Heart right ventricle (tissue), 16 donors: ENCODE measurements at regions of chr11 and their contacts with region 1.

Region 1: DNA sequence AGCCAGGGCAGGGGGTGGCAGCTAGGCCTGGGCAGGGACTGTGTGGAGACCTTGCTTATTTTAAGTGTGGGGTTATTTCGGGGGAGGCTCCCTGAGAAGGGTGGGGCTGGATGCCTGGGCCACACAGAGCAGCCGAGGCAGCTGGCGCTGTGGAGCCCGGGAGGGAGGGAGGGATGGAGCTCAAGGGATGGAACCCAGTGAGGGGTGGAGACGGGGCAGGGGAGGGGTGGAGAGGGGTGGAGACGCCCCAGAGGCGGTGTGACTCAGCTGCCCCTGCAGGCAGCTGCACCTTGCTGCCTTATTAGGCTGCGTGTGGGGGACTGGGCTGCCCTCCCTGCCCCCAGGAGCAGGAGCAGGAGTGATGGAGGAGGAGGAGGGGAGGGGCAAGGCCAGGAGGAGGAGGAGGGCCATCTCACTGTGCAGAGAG is 9.8 kb upstream of the TSSC4 start:
- DNase-seq: no peak
- ATAC-seq: peak in 7 of 8 donors; percentile 16 to 58 (median 35)
- H3K4me3 ChIP-seq: no peak overlapping the region
- H3K27ac ChIP-seq: peak overlapping the region in 8 of 10 donors; percentile 48 to 79 (median 68)
- H3K4me1 ChIP-seq: peaks cover 48 to 76% (median 59%) of the 10 kb centered on the region in 9 donors
- H3K27me3 ChIP-seq: no peaks in the 10 kb centered on the region
- CTCF ChIP-seq: no peak

Region 2: DNA sequence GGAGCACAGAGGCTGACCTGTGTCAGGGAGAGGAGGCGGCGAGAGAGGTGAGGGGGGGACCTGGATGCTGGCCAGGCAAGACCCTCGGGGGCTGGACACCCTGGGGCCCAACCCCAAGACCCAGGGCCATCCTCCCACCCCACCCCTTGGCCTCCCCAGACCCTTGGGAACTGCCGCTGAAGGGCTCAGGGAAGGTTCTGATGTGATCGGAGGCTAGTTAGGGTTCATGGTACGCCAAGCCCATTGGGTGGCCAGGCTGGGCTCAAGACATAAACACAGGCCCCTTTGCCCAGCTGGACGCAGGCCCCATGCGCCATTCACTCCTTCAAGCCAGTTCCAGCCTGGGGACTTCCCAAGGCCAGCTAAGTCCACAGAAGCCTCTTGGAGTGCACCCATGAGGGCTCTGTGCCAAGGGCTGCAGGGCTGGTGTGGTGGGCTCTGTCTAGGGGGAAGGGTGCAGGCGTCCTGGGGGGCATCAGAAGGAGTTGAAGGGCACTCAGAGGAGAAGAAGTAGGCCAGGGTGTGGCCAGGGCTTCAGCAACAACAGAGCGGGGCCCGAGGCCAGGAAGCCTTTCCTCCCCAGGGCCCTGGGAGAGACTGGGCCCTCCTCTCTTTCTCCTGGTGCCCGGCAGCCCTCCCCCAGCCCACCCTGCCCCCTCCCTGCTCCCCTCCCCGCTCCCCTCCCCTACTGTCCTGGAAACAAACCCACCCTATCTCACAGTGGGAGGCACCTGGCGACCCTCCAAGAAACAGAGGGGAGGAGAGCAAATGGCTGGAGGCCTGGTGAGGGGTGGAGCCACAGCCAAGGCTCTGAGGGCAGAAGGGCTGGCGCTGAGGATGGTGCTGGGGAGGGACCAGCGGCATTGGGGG is 76.0 kb before region 1 on chr11:
- intact Hi-C with region 1: loop called in 2 of 10 experiments (anchors 5 kb)
- DNase-seq: peak; percentile 91 to 95
- ATAC-seq: peak; percentile 78 to 91 (median 88)
- H3K4me3 ChIP-seq: peak overlapping the region in 6 of 10 donors; percentile 4 to 33 (median 22)
- H3K27ac ChIP-seq: peak overlapping the region; percentile 68 to 92 (median 86)
- H3K4me1 ChIP-seq: peaks cover 13 to 47% (median 31%) of the 10 kb centered on the region in 9 donors
- H3K27me3 ChIP-seq: no peaks in the 10 kb centered on the region
- CTCF ChIP-seq: no peak